Astrocyte of the cerebellum (primary cell): ENCODE measurements at regions of chr19 and their contacts with region 1.

Region 1: DNA sequence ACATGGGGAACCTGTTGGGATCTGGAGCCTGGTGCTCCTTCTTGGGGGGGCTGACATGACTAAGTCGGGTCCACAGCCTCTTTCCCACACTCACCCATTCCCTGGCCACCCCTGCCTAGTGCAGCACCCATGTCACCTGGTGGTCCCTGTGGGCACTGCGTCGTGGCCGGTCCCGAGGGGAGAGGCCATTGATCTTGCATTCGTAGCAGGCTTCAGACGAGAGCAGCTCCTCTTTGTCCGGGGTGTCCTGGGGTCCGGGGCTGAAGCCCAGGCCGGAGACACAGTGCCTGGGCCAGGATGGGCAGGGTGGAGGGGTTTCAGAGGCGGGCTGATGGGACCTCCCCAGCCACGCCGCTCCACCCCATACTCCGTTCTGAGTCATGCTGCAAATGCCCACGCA is 19.4 kb downstream of the CCL25 start:
- DNase-seq: no peak
- H3K4me3 ChIP-seq: no peak overlapping the region
- CTCF ChIP-seq: no peak

Region 2: GRCh38 chr19:8028951-8029491 is 42.9 kb before region 1 on chr19:
- in situ Hi-C with region 1: loop called (anchors 5 kb)
- DNase-seq: no peak
- H3K4me3 ChIP-seq: no peak overlapping the region
- CTCF ChIP-seq: no peak

Region 3: GRCh38 chr19:8108560-8109445 is 36.9 kb after region 1 on chr19:
- in situ Hi-C with region 1: loop called (anchors 5 kb)
- DNase-seq: no peak
- H3K4me3 ChIP-seq: no peak overlapping the region
- CTCF ChIP-seq: no peak